CD4-positive, alpha-beta memory T cell (primary cell): ENCODE measurements at regions of chr6 and their contacts with region 1.

Region 1: GRCh38 chr6:45479834-45480751 is 102.4 kb upstream of the SUPT3H start:
- DNase-seq: peak in 1 of 5 donors; percentile 12
- H3K4me3 ChIP-seq: no peak overlapping the region
- H3K4me3 Mint-ChIP-seq: no peak overlapping the region
- H3K27ac ChIP-seq: no peak overlapping the region
- H3K27ac Mint-ChIP-seq: peak overlapping the region in 3 of 7 donors; percentile 23 to 51 (median 34)
- H3K4me1 ChIP-seq: peaks cover 31% of the 10 kb centered on the region
- H3K4me1 Mint-ChIP-seq: peaks cover 11 to 42% (median 31%) of the 10 kb centered on the region in 4 donors
- H3K27me3 ChIP-seq: no peaks in the 10 kb centered on the region
- H3K27me3 Mint-ChIP-seq: no peaks in the 10 kb centered on the region

Region 2: GRCh38 chr6:44983467-44984365 is 496.4 kb before region 1 on chr6:
- CTCF ChIA-PET with region 1: no interaction called
- POLR2A ChIA-PET with region 1: no interaction called
- intact Hi-C with region 1: no loop called
- DNase-seq: no peak
- H3K4me3 ChIP-seq: no peak overlapping the region
- H3K4me3 Mint-ChIP-seq: no peak overlapping the region
- H3K27ac ChIP-seq: no peak overlapping the region
- H3K27ac Mint-ChIP-seq: no peak overlapping the region
- H3K4me1 ChIP-seq: peaks cover 1% of the 10 kb centered on the region
- H3K4me1 Mint-ChIP-seq: peaks cover 7 to 22% (median 10%) of the 10 kb centered on the region in 4 donors
- H3K27me3 ChIP-seq: no peaks in the 10 kb centered on the region
- H3K27me3 Mint-ChIP-seq: no peaks in the 10 kb centered on the region

Region 3: DNA sequence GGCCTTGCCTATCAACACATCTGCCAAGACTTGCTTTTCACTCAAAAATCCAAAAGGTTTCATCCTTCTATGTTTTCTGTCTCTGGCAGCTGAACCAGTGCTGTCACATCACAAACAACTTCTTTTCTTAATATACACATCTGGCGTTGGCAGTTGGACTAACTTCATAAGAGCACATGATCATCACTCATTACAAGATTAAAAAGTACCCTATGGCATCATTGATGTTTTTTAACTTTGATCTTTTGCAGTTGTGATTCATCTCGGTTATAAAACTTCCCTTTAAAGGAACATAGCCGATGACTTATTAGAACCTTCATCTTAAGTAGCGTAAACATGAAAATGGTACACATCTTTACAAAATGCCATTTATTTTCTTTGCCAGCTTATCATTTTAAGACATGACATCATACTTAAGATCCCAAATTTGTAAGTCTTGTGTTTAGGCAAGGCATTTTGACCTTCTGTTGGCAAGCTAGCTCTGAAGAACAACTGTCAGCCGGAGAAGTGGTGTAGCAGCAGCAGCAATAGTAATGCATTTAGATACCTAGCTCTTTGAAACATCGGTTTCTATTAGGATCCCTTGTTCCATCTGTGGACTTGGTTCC is 38.1 kb before region 1 on chr6:
- CTCF ChIA-PET with region 1: no interaction called
- POLR2A ChIA-PET with region 1: no interaction called
- intact Hi-C with region 1: no loop called
- DNase-seq: peak in 3 of 5 donors; percentile 29 to 61 (median 44)
- H3K4me3 ChIP-seq: no peak overlapping the region
- H3K4me3 Mint-ChIP-seq: peak overlapping the region in 5 of 8 donors; percentile 7 to 57 (median 26)
- H3K27ac ChIP-seq: no peak overlapping the region
- H3K27ac Mint-ChIP-seq: peak overlapping the region; percentile 58 to 88 (median 82)
- H3K4me1 ChIP-seq: peaks cover 67% of the 10 kb centered on the region
- H3K4me1 Mint-ChIP-seq: peaks cover 51 to 95% (median 74%) of the 10 kb centered on the region in 4 donors
- H3K27me3 ChIP-seq: no peaks in the 10 kb centered on the region
- H3K27me3 Mint-ChIP-seq: no peaks in the 10 kb centered on the region

Region 4: GRCh38 chr6:45462190-45463134 is 17.6 kb before region 1 on chr6:
- CTCF ChIA-PET with region 1: no interaction called
- POLR2A ChIA-PET with region 1: no interaction called
- intact Hi-C with region 1: no loop called
- DNase-seq: no peak
- H3K4me3 ChIP-seq: no peak overlapping the region
- H3K4me3 Mint-ChIP-seq: peak overlapping the region in 3 of 8 donors; percentile 1 to 25 (median 17)
- H3K27ac ChIP-seq: no peak overlapping the region
- H3K27ac Mint-ChIP-seq: peak overlapping the region in 6 of 7 donors; percentile 36 to 70 (median 44)
- H3K4me1 ChIP-seq: peaks cover 18% of the 10 kb centered on the region
- H3K4me1 Mint-ChIP-seq: peaks cover 10 to 25% (median 17%) of the 10 kb centered on the region in 4 donors
- H3K27me3 ChIP-seq: no peaks in the 10 kb centered on the region
- H3K27me3 Mint-ChIP-seq: no peaks in the 10 kb centered on the region

Region 5: GRCh38 chr6:45495429-45496084 is 15.5 kb after region 1 on chr6:
- CTCF ChIA-PET with region 1: interaction called, 3 read pairs
- POLR2A ChIA-PET with region 1: interaction called, 6 read pairs
- intact Hi-C with region 1: loop called (anchors 2 kb)
- DNase-seq: peak; percentile 47 to 69 (median 55)
- H3K4me3 ChIP-seq: no peak overlapping the region
- H3K4me3 Mint-ChIP-seq: peak overlapping the region in 7 of 8 donors; percentile 56 to 86 (median 72)
- H3K27ac ChIP-seq: no peak overlapping the region
- H3K27ac Mint-ChIP-seq: peak overlapping the region; percentile 53 to 93 (median 81)
- H3K4me1 ChIP-seq: peaks cover 46% of the 10 kb centered on the region
- H3K4me1 Mint-ChIP-seq: peaks cover 43 to 68% (median 59%) of the 10 kb centered on the region in 4 donors
- H3K27me3 ChIP-seq: no peaks in the 10 kb centered on the region
- H3K27me3 Mint-ChIP-seq: no peaks in the 10 kb centered on the region